ENCODE measurements at regions of chr1 and their contacts with region 1.

Region 1: GRCh38 chr1:244864253-244865027 is at the start of gene HNRNPU:
- DNase-seq: peak; percentile 97 to 99
- ATAC-seq: peak; percentile 63 to 87 (median 65)
- H3K4me3 ChIP-seq: peak within 1 kb of the TSS; percentile 94
- H3K4me3 Mint-ChIP-seq: peak within 1 kb of the TSS; percentile 98
- H3K27ac ChIP-seq: peak within 1 kb of the TSS; percentile 92
- H3K27ac Mint-ChIP-seq: peak within 1 kb of the TSS; percentile 93 to 98
- H3K4me1 ChIP-seq: peaks cover 21% of the 10 kb centered on the region
- H3K4me1 Mint-ChIP-seq: peaks cover 50 to 63% of the 10 kb centered on the region in 2 donors
- H3K27me3 ChIP-seq: no peaks in the 10 kb centered on the region
- H3K27me3 Mint-ChIP-seq: no peaks in the 10 kb centered on the region
- CTCF ChIP-seq: peak; percentile 51
- total RNA-seq, gene HNRNPU: 467 to 603 (median 504) TPM

Region 2: DNA sequence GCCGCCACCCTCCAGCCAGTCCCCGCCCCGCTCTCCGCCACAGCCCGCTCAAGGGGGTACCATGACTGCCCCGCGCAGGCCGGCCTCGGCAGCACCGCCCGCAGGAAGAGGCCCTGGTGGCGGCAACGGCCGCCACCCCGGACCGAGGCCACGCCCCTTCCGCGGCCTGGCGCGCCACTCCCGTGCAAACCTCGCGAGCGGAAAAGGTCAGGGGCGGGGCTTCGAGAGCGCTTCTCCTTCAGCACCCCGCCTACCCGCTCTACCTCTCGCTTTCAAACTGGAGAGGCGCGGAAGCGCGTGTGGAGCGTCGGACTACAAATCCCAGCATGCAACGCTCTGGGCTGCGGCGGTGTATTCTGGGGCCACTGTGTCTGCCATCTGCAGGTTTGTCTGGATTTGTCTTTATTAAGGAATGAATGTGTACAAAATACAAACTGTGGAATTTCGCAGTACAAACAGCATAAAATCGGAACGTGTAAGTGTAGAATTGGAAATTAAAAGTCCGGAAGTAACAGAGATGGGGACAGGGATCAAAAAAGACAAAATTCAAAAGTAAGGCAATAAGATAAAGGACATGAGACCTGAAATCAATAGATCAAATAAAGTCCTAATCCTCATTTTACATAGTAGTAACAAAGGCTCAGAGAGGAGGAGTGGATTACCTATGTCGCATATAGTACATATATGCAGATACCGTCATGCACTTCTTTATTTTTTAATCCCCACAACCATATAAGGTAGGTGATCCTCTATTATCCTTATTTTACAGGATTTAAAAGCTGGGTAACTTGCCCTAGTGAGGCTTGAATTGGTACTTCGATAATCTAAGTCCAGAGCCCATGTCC is 412.3 kb before region 1 on chr1:
- intact Hi-C with region 1: loop called (anchors 10 kb)
- DNase-seq: peak; percentile 98 to 100
- ATAC-seq: peak; percentile 85 to 96 (median 90)
- H3K4me3 ChIP-seq: peak overlapping the region; percentile 72
- H3K4me3 Mint-ChIP-seq: peak overlapping the region; percentile 80
- H3K27ac ChIP-seq: peak overlapping the region; percentile 92
- H3K27ac Mint-ChIP-seq: peak overlapping the region; percentile 85 to 88
- H3K4me1 ChIP-seq: peaks cover 9% of the 10 kb centered on the region
- H3K4me1 Mint-ChIP-seq: peaks cover 33 to 37% of the 10 kb centered on the region in 2 donors
- H3K27me3 ChIP-seq: no peaks in the 10 kb centered on the region
- H3K27me3 Mint-ChIP-seq: no peaks in the 10 kb centered on the region
- CTCF ChIP-seq: peak; percentile 31

Region 3: DNA sequence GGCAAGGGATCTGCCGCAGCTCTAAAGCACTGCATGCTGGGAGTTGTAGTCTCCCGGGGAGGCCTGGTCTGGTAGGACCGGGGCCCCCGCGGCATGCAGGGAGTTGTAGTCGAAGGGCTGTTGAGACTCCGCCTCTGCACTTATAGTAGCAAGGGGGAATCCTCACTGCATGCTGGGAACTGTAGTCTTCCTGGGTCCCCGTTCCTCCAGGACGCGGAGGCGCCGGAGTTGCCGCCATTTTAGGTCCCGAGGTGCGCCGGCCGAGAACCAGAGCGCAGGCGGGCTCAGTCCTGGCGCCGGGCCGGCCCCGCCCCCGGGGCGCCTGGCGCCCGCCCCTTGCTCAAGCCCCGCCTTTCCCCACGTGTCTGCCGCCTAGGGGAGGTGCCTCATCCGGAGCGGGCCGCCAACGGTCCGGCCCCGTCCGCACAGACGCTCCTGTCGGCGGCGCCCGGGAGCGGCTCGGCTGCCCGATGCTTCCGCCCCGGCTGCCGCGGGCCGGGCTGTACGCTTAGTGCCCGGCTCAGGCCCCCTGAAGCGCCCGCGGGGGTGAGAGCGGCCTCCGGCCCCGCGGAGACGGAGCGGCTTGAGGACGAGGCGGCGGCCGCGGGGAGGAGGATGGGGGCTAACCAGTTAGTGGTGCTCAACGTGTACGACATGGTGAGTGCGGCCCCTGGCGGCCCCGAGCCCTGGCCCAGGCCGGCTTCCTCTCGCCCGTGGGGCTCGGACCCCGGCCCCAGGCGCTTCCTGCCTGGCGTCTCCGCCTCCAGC is 211.6 kb before region 1 on chr1 and contains the start of gene DESI2:
- intact Hi-C with region 1: loop called (anchors 1 kb)
- DNase-seq: peak; percentile 96 to 99
- ATAC-seq: peak; percentile 88 to 96 (median 88)
- H3K4me3 ChIP-seq: peak within 1 kb of the TSS; percentile 90
- H3K4me3 Mint-ChIP-seq: peak within 1 kb of the TSS; percentile 77
- H3K27ac ChIP-seq: peak within 1 kb of the TSS; percentile 76
- H3K27ac Mint-ChIP-seq: peak within 1 kb of the TSS in 1 of 2 donors; percentile 75
- H3K4me1 ChIP-seq: peaks cover 14% of the 10 kb centered on the region
- H3K4me1 Mint-ChIP-seq: peaks cover 19 to 22% of the 10 kb centered on the region in 2 donors
- H3K27me3 ChIP-seq: no peaks in the 10 kb centered on the region
- H3K27me3 Mint-ChIP-seq: peaks cover 0 to 4% of the 10 kb centered on the region in 2 donors
- CTCF ChIP-seq: peak; percentile 48
- total RNA-seq, gene DESI2: 24.1 to 30.5 (median 25.4) TPM

Region 4: DNA sequence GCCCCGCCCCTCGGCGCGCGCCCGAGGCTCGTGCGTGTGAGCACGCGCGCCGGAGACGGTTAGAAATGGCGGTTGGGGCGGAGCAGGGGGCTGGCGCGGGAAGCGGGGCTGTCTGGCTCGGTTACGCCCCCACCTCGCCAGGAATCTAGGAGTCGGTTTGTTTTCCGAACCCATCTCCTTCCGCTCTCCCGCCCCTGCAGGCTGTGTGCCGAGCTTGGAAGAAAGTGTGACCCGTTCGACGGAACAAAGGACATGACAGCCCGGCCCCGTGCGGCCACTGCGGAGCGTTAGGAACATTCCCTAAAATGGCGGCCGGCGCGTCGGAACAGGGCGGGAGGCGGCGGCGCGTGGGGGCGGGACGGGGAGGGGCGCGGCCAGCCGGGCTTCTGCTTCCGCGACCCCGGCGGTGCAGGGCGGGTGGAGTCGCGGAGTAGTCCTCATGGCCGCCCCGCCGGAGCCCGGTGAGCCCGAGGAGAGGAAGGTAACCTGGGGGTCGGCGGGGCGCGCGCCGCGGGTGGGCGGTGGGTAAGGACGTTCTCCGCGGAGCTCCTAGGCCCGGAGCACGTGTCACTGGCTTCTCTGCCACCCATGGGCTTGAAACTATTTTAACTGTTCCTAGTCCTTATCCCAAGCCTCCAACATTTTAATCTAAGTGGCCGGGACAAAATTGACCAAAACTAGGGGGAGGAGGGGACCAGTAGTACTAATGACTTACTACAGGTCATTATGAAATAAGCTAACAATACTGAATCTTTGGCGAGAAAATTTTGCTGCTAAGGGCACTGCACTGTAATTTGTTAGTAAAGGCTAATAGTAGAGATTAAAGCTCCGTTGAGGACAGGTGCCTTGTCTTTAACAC is 28.9 kb before region 1 on chr1 and contains the start of gene COX20:
- intact Hi-C with region 1: loop called (anchors 1 kb)
- DNase-seq: peak in 1 of 2 donors; percentile 95
- ATAC-seq: peak; percentile 71 to 89 (median 72)
- H3K4me3 ChIP-seq: peak within 1 kb of the TSS; percentile 61
- H3K4me3 Mint-ChIP-seq: peak within 1 kb of the TSS; percentile 98
- H3K27ac ChIP-seq: peak within 1 kb of the TSS; percentile 99
- H3K27ac Mint-ChIP-seq: peak within 1 kb of the TSS; percentile 96 to 99
- H3K4me1 ChIP-seq: peaks cover 11% of the 10 kb centered on the region
- H3K4me1 Mint-ChIP-seq: peaks cover 48 to 54% of the 10 kb centered on the region in 2 donors
- H3K27me3 ChIP-seq: no peaks in the 10 kb centered on the region
- H3K27me3 Mint-ChIP-seq: no peaks in the 10 kb centered on the region
- CTCF ChIP-seq: no peak
- total RNA-seq, gene COX20: 24.3 to 25.4 (median 24.9) TPM

Region 5: GRCh38 chr1:244851546-244852231 is 12.8 kb before region 1 on chr1:
- intact Hi-C with region 1: loop called (anchors 1 kb)
- DNase-seq: no peak
- ATAC-seq: peak in 1 of 3 donors; percentile 14
- H3K4me3 ChIP-seq: no peak overlapping the region
- H3K4me3 Mint-ChIP-seq: peak overlapping the region; percentile 43
- H3K27ac ChIP-seq: no peak overlapping the region
- H3K27ac Mint-ChIP-seq: peak overlapping the region; percentile 80 to 88
- H3K4me1 ChIP-seq: peaks cover 7% of the 10 kb centered on the region
- H3K4me1 Mint-ChIP-seq: peaks cover 64 to 76% of the 10 kb centered on the region in 2 donors
- H3K27me3 ChIP-seq: no peaks in the 10 kb centered on the region
- H3K27me3 Mint-ChIP-seq: no peaks in the 10 kb centered on the region
- CTCF ChIP-seq: no peak

Region 6: DNA sequence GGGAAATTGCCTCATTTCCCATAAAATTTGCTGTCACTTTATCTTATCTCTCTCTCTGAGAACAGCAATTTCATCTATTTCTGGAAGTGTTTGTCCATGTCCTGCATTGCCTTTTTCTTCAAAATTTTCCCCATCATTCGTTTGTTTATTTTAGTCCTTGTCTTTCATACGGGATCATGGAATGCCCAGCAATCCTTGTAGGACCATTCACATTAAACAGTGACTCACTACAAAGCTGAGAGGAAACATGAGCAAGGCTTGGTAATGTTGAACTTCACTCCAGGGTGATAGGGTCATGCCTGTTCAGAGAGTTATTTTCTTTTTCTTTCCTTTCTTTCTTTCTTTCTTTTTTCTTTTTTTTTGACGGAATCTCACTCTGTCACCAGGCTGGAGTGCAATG is 32.1 kb after region 1 on chr1:
- intact Hi-C with region 1: no loop called
- DNase-seq: no peak
- ATAC-seq: no peak
- H3K4me3 ChIP-seq: no peak overlapping the region
- H3K4me3 Mint-ChIP-seq: no peak overlapping the region
- H3K27ac ChIP-seq: no peak overlapping the region
- H3K27ac Mint-ChIP-seq: no peak overlapping the region
- H3K4me1 ChIP-seq: no peaks in the 10 kb centered on the region
- H3K4me1 Mint-ChIP-seq: peaks cover 0 to 7% of the 10 kb centered on the region in 2 donors
- H3K27me3 ChIP-seq: no peaks in the 10 kb centered on the region
- H3K27me3 Mint-ChIP-seq: no peaks in the 10 kb centered on the region
- CTCF ChIP-seq: no peak

Region 7: DNA sequence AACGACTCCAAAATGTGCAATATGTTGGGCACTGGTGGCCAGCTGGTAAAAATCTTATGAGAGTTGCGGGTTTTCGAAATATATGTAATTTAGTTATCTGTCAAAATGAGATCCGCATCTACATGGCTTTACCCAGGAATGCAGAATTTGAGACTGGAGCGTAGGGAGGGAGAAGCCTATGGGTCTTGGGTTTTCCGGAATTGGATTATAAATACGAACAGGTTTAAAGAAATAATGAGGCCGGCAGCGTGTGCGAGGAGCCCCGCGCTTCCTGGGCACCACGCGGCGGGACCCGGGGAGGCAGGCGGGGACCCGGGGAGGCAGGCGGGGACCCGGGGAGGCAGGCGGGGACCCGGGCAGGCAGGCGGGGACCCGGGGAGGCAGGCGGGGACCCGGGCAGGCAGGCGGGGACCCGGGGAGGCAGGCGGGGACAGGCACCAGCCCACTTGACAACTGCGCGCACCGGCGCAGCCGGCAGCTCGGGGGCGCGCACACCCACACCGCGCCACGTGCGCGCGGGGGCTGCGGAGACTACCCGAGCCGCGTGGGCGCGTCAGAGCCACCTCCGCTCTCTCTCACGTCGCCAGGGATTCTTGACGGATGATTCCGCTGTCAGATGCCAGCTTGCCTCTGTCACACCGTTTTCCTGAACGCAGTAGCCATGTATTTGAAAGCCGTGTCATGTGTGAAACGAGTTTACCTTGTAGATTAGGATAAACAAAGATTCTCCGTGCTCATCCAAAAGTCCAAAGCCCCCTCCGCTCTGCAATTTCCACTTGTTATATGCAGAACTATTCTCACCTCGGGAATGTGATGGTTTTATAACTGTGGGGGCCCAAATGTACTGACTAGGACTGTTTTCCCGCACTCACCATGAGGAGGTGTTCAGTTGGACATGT is 54.2 kb after region 1 on chr1:
- intact Hi-C with region 1: loop called (anchors 2 kb)
- DNase-seq: peak; percentile 67 to 88
- ATAC-seq: peak; percentile 95 to 98 (median 98)
- H3K4me3 ChIP-seq: peak overlapping the region; percentile 44
- H3K4me3 Mint-ChIP-seq: peak overlapping the region; percentile 96
- H3K27ac ChIP-seq: no peak overlapping the region
- H3K27ac Mint-ChIP-seq: peak overlapping the region; percentile 56 to 93
- H3K4me1 ChIP-seq: peaks cover 9% of the 10 kb centered on the region
- H3K4me1 Mint-ChIP-seq: peaks cover 6 to 15% of the 10 kb centered on the region in 2 donors
- H3K27me3 ChIP-seq: no peaks in the 10 kb centered on the region
- H3K27me3 Mint-ChIP-seq: no peaks in the 10 kb centered on the region
- CTCF ChIP-seq: no peak